ENCODE measurements at regions of chr7 and their contacts with region 1.

Region 1: GRCh38 chr7:1144269-1144771 is 15.7 kb downstream of the ZFAND2A start:
- DNase-seq: peak in 7 of 10 donors; percentile 17 to 86 (median 48)

Region 2: DNA sequence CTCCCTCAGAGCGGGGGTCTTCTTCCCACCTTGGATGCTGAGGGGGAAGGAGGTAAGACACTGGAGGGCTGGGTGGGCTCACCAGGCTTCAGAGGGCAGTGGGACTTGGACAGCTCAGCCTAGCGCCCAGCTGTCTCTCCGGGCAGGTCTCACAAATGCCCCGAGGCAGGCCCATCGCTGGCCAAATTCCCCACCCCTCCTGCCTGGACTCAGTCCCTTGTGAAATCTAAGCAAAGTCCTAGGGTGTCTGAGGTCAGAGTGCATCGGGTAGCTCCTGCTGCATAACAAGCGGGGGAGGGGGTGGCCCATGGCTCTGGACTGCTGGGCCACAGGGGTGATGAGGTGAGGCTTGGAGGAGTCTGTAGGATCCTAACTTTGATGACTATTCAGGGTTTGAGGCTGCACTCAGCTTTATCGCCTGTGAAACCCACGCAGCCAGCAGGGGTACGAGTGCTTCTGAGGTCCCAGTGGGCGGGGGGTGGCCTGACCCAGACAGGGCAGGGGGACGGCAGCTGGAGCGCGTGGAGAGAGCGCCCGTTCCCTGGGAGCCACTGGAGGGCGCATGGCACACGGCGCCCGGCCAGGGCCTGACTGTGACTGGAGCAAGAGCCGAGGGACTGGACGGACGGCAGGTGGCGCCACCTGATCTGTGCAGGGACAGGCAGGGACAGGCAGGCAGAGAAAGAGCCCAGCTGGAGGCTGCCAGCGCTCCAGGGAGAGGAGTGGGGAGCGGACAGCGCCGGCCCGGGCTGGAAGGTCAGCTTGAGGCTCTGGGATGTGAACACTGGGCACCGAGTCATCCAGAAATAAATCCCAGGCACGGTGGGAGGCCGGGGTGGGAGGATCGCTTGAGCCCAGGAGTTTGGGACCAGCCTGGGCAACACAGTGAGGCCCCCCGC is 151.4 kb before region 1 on chr7:
- intact Hi-C with region 1: loop called (anchors 5 kb)
- DNase-seq: peak; percentile 94 to 100 (median 99)